Left ventricle myocardium inferior (tissue), 1 donor: ENCODE measurements at regions of chr3 and their contacts with region 1.

Region 1: DNA sequence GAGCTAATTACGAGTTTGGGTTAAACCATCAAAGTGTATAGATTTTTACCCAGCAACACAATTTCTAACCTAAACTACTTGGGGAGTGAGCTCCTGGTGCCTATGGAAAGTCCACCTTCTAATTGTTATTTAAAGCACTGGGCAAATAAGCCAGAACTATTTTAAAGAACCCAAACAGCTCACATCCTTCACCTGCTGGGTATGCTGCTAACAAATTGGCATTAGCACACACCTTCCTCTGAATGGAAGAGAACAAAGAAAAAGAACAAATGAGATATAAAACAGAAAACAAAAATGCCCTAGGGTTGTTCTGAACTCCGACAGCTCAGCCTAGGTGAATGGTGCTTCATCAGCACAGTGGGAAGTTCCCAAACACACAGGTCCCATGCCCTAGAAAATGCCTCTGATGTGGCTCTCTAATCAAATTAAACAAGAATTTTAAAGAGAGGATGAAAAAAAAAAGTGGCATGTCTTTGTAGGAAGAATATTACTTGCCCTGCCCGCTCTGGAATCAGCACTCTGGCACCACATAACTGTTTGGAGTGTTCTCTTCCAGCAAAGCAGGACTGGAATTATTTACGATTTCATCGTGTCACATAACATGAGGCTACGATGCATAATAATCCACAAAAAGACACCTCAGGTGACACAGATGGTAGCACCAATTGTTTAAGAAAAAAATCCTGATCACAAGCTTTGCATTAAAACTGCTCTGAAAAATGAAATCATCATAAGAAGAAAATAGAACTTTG is 334.4 kb downstream of the GBE1 start:
- DNase-seq: no peak
- H3K4me3 ChIP-seq: no peak overlapping the region
- H3K27ac ChIP-seq: no peak overlapping the region
- H3K4me1 ChIP-seq: no peaks in the 10 kb centered on the region
- H3K27me3 ChIP-seq: no peaks in the 10 kb centered on the region
- CTCF ChIP-seq: no peak

Region 2: GRCh38 chr3:81363816-81364215 is 63.2 kb before region 1 on chr3:
- intact Hi-C with region 1: loop called (anchors 2 kb)
- DNase-seq: no peak
- H3K4me3 ChIP-seq: no peak overlapping the region
- H3K27ac ChIP-seq: no peak overlapping the region
- H3K4me1 ChIP-seq: no peaks in the 10 kb centered on the region
- H3K27me3 ChIP-seq: no peaks in the 10 kb centered on the region
- CTCF ChIP-seq: no peak

Region 3: GRCh38 chr3:81451611-81452010 is 24.6 kb after region 1 on chr3:
- intact Hi-C with region 1: no loop called
- DNase-seq: no peak
- H3K4me3 ChIP-seq: no peak overlapping the region
- H3K27ac ChIP-seq: no peak overlapping the region
- H3K4me1 ChIP-seq: peaks cover 18% of the 10 kb centered on the region
- H3K27me3 ChIP-seq: no peaks in the 10 kb centered on the region
- CTCF ChIP-seq: no peak